AG04449 (cell line): ENCODE measurements at regions of chr9 and their contacts with region 1.

Region 1: DNA sequence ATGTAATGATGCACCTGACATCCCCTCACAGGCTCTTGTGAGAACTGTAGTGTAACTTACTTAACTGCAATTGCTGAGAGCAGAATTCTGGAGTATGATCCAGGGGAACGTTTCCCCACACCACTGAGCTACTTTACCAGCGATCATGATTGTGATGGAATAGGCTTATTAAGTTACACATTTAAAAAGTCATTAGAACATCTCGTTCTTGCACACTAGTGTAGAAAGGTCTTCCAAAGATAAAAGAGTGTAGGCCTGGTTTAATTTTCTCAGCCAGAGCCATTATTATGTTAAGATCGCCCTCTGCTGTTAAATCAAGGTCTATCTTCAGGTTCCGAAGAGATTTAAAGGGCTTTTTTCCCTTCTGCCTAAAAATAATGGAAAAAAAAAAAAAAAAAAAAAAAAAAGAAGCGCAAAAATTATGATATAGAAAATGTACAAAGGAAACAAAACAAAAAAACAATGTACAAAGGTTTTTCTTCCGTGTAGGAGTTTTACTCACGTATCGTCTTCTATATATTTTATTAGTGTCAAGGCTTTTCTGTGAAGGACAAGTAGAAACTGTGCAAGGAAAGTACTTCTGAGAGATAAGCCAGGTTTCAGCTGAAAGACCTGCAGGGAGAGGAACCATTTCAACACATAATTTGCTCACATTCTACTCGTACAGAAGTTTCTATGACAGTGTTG is 18.6 kb upstream of the MOB3B start:
- DNase-seq: no peak
- H3K4me3 ChIP-seq: no peak overlapping the region
- CTCF ChIP-seq: peak; percentile 7

Region 2: DNA sequence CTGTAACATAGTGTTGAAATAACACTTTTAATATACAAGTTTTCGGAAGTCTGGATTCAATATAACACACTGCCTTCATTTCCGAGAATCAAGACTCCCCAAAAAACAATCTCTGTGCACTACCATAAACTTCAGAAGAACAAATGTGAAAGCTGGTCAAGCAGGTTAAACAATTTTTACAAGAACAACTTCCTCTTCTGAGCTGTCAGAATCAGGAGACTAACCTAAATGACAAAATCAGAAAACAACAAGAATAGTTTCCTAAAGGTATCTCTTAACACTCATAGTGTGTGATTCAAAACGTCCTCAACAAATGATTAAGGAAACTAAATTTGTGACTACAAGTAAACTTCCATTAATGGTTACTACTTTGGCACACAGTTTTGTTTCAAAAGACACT is 13.5 kb after region 1 on chr9:
- CTCF ChIA-PET with region 1: interaction called, 23 read pairs
- POLR2A ChIA-PET with region 1: no interaction called
- DNase-seq: no peak
- H3K4me3 ChIP-seq: no peak overlapping the region
- CTCF ChIP-seq: no peak